HepG2 (cell line): ENCODE measurements at regions of chr4 and their contacts with region 1.

Region 1: GRCh38 chr4:6783053-6783981 is 790 bp downstream of the KIAA0232 start:
- DNase-seq: peak; percentile 80
- ATAC-seq: peak; percentile 74
- H3K4me3 ChIP-seq: peak overlapping the region; percentile 93 to 98 (median 95)
- H3K27ac ChIP-seq: peak overlapping the region; percentile 93
- H3K4me1 ChIP-seq: peaks cover 59% of the 10 kb centered on the region
- H3K27me3 ChIP-seq: no peaks in the 10 kb centered on the region; a peak in 1 of 5 replicates
- CTCF ChIP-seq: peak; percentile 65
- EP300 ChIP-seq: 0 out of 4 replicates have a peak, but pooled peaks have one; percentile 25 to 31
- POLR2A ChIP-seq: peak in 1 of 2 experiments; percentile 58; a peak in 2 of 4 replicates
- RAD21 ChIP-seq: no peak; the same call in none of the 2 replicates

Region 2: GRCh38 chr4:6749341-6750171 is 33.8 kb before region 1 on chr4:
- CTCF ChIA-PET with region 1: no interaction called
- POLR2A ChIA-PET with region 1: interaction called, 11 read pairs
- in situ Hi-C with region 1: no loop called
- intact Hi-C with region 1: loop called (anchors 2 kb)
- DNase-seq: peak; percentile 91
- ATAC-seq: peak; percentile 88
- H3K4me3 ChIP-seq: peak overlapping the region; percentile 58 to 74 (median 63)
- H3K27ac ChIP-seq: peak overlapping the region; percentile 83
- H3K4me1 ChIP-seq: peaks cover 89% of the 10 kb centered on the region
- H3K27me3 ChIP-seq: no peaks in the 10 kb centered on the region; a peak in 1 of 5 replicates
- CTCF ChIP-seq: peak; percentile 38
- EP300 ChIP-seq: peak; percentile 32 to 61; a peak in 2 of 4 replicates
- POLR2A ChIP-seq: peak in 1 of 2 experiments; percentile 60; a peak in 1 of 4 replicates
- RAD21 ChIP-seq: peak; percentile 62

Region 3: GRCh38 chr4:6754785-6755753 is 28.2 kb before region 1 on chr4:
- CTCF ChIA-PET with region 1: no interaction called
- POLR2A ChIA-PET with region 1: interaction called, 11 read pairs
- in situ Hi-C with region 1: no loop called
- intact Hi-C with region 1: loop called (anchors 2 kb)
- DNase-seq: peak; percentile 92
- ATAC-seq: peak; percentile 77
- H3K4me3 ChIP-seq: no peak overlapping the region
- H3K27ac ChIP-seq: peak overlapping the region; percentile 61
- H3K4me1 ChIP-seq: peaks cover 62% of the 10 kb centered on the region
- H3K27me3 ChIP-seq: no peaks in the 10 kb centered on the region; a peak in 1 of 5 replicates
- CTCF ChIP-seq: 0 out of 2 replicates have a peak, but pooled peaks have one; percentile 32
- EP300 ChIP-seq: peak in 1 of 2 experiments; percentile 89; a peak in 2 of 4 replicates
- POLR2A ChIP-seq: no peak; a peak in 1 of 4 replicates
- RAD21 ChIP-seq: no peak